ENCODE measurements at regions of chr2 and their contacts with region 1.

Region 1: GRCh38 chr2:191501561-191502168 is 176.3 kb upstream of the NABP1 start:
- DNase-seq: no peak
- ATAC-seq: no peak
- H3K4me3 ChIP-seq: no peak overlapping the region
- H3K27ac ChIP-seq: peak overlapping the region in 3 of 4 donors; percentile 38 to 54 (median 54)
- H3K4me1 ChIP-seq: no peaks in the 10 kb centered on the region
- H3K27me3 ChIP-seq: no peaks in the 10 kb centered on the region
- CTCF ChIP-seq: peak in 4 of 5 experiments; percentile 16 to 55 (median 34)
- POLR2A ChIP-seq: no peak

Region 2: GRCh38 chr2:190149908-190150307 is 1351.8 kb before region 1 on chr2:
- in situ Hi-C with region 1: no loop called
- intact Hi-C with region 1: no loop called
- DNase-seq: no peak
- ATAC-seq: no peak
- H3K4me3 ChIP-seq: no peak overlapping the region
- H3K27ac ChIP-seq: no peak overlapping the region
- H3K4me1 ChIP-seq: no peaks in the 10 kb centered on the region
- H3K27me3 ChIP-seq: no peaks in the 10 kb centered on the region
- CTCF ChIP-seq: no peak
- POLR2A ChIP-seq: no peak

Region 3: DNA sequence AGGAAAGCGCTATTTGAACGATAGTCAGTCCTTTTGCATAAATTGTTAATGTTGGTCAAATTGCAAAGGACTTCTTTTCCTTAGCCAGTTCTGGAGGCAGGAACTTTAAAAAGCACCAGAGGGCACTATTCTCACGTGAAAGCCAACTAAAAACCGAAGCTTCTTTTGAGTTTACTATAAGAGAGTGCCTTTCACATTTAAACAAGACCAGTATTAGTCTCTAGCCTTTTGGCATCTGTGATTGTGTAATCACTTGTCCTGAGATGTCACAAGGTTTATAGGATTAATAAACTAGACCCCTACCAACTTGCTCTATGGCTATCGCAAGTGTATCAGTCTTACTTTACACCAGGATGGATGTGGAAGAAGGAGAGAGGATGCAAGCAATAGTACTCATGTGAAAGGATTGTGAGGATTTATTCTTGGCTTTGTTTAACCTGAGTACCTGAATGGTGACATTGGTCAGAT is 336.5 kb before region 1 on chr2:
- in situ Hi-C with region 1: loop called in 1 of 4 experiments (anchors 25 kb)
- intact Hi-C with region 1: loop called (anchors 5 kb)
- DNase-seq: no peak
- ATAC-seq: peak; percentile 69 to 77
- H3K4me3 ChIP-seq: peak overlapping the region in 1 of 4 donors; percentile 38
- H3K27ac ChIP-seq: no peak overlapping the region
- H3K4me1 ChIP-seq: peaks cover 19 to 23% of the 10 kb centered on the region in 2 donors
- H3K27me3 ChIP-seq: no peaks in the 10 kb centered on the region
- CTCF ChIP-seq: peak in 4 of 5 experiments; percentile 22 to 65 (median 55)
- POLR2A ChIP-seq: no peak

Region 4: DNA sequence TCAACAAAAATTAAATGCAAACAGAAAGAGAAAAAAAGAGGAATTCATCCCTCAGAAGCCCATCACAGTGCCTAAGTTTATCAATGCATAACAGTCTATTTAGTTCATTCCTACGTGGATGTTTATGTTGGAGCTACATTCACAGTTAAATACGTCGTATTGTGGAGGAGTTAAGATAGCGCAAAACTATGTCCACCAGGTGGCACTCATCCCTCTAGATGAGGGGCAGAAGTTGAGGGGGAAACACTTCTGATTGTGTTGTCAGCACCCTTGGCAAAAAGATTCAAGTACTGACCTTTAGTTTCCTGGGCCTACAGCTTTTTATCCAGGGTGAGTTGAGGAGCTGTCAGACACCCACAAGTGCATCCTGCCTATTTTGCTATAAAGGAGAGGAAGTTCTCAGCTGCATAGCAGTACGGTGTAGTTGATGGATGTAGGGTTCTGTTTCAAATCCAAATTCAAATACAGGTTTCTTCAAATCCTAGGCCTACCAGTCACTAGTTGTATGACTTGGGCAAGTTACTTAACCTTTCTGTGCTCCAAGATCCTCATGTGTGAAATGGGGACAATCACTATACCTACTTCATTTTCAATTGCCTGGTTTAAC is 283.3 kb before region 1 on chr2:
- in situ Hi-C with region 1: no loop called
- intact Hi-C with region 1: loop called (anchors 10 kb)
- DNase-seq: no peak
- ATAC-seq: peak in 1 of 2 donors; percentile 36
- H3K4me3 ChIP-seq: no peak overlapping the region
- H3K27ac ChIP-seq: no peak overlapping the region
- H3K4me1 ChIP-seq: peaks cover 0 to 6% of the 10 kb centered on the region in 2 donors
- H3K27me3 ChIP-seq: no peaks in the 10 kb centered on the region
- CTCF ChIP-seq: peak in 4 of 5 experiments; percentile 14 to 57 (median 44)
- POLR2A ChIP-seq: no peak

Region 5: GRCh38 chr2:191401287-191401686 is 100.4 kb before region 1 on chr2:
- in situ Hi-C with region 1: no loop called
- intact Hi-C with region 1: loop called (anchors 10 kb)
- DNase-seq: no peak
- ATAC-seq: no peak
- H3K4me3 ChIP-seq: no peak overlapping the region
- H3K27ac ChIP-seq: no peak overlapping the region
- H3K4me1 ChIP-seq: no peaks in the 10 kb centered on the region
- H3K27me3 ChIP-seq: no peaks in the 10 kb centered on the region
- CTCF ChIP-seq: no peak
- POLR2A ChIP-seq: no peak

Measured in gastrocnemius medialis (tissue), 4 donors.